Left colon (tissue), 2 donors: ENCODE measurements at regions of chr11 and their contacts with region 1.

Region 1: GRCh38 chr11:96055706-96056387 is 131.9 kb upstream of the MTMR2 start:
- DNase-seq: no peak
- ATAC-seq: no peak

Region 2: DNA sequence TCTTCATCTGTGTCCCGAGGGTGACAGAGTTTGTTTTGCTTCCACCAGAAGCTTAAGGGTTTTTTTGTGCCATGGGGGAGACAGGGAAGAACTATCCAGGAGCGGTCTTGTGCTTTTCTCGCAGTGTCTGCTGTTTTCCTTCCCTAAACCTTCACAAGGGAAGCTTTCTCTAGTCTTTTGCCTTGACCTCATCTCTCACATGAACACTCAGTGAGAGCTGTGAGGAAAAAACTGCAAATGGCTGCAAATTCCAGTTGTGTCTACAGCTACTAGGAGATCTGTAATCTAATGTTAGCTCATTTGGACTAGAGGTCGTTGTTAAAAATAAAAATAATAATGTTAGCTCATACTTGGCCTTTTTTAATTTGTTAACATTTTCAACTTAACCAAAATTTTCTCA is 560.1 kb before region 1 on chr11:
- intact Hi-C with region 1: no loop called
- DNase-seq: no peak
- ATAC-seq: no peak

Region 3: GRCh38 chr11:96001037-96001436 is 54.8 kb before region 1 on chr11:
- intact Hi-C with region 1: no loop called
- DNase-seq: peak; percentile 17 to 58
- ATAC-seq: no peak

Region 4: DNA sequence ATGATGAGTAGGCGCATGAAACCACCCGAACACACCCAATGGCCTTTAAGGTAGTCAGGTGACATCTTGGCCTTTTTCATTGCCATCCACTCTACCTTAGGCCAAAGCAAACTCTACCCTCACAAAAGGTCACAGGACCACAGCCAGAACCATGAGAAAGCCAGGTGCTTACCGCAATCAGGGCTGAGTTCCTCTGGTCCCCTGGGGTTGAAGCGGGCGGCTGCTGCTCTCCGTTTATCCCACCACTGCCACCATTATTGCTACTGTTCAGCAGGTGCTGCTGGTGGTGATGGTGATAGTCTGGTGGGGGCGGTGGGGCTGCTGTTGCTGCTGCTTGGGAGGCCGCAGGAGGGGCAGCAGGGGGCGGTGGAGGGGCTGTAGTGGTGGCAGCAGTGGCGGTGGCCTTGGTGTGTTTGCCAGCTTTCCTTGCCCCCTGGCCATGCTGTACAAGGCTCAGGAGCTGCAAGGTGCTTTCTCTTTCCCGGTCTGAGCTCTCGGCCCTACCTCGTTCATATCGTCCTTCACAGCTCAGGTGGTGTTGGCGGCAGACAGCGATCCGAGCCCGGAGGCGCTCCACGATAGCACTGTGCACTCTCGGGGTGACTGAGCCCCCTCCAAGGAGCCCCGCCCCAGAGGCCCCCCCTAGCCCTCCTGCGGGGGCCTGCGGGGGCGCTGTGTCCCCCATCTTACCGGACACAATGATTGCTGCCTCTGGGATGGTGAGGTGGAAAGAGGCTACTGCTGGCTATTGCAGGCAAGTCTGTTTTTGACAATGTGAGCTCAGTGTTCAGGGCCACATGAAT is 285.6 kb after region 1 on chr11:
- intact Hi-C with region 1: loop called in 1 of 2 experiments (anchors 2 kb)
- DNase-seq: peak; percentile 65 to 75
- ATAC-seq: peak; percentile 56

Region 5: DNA sequence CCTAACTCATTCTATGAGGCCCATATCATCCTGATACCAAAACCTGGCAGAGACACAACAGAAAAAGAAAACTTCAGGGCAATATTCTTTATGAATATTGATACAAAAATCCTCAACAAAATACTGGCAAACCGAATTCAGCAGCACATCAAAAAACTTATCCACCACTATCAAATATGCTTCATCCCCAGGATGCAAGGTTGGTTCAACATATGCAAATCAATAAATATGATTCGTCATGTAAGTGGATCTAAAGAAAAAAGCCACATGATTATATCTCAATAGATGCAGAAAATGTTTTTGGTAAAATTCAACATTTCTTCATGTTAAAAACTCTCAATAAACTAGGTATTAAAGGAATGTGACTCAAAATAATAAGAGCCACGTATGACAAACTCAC is 374.8 kb after region 1 on chr11:
- intact Hi-C with region 1: no loop called
- DNase-seq: no peak
- ATAC-seq: no peak